ENCODE measurements at regions of chrX and their contacts with region 1.

Region 1: GRCh38 chrX:109714340-109714958 is 18.6 kb downstream of the ACSL4 start:
- DNase-seq: no peak
- H3K4me3 ChIP-seq: no peak overlapping the region
- H3K27ac ChIP-seq: no peak overlapping the region
- H3K4me1 ChIP-seq: peaks cover 13% of the 10 kb centered on the region
- CTCF ChIP-seq: no peak

Region 2: GRCh38 chrX:109886122-109886761 is 171.8 kb after region 1 on chrX:
- CTCF ChIA-PET with region 1: no interaction called
- POLR2A ChIA-PET with region 1: no interaction called
- intact Hi-C with region 1: loop called (anchors 10 kb)
- DNase-seq: peak; percentile 35
- H3K4me3 ChIP-seq: no peak overlapping the region
- H3K27ac ChIP-seq: no peak overlapping the region
- H3K4me1 ChIP-seq: peaks cover 12% of the 10 kb centered on the region
- CTCF ChIP-seq: peak; percentile 78

Region 3: GRCh38 chrX:109974906-109975655 is 260.6 kb after region 1 on chrX:
- CTCF ChIA-PET with region 1: no interaction called
- POLR2A ChIA-PET with region 1: no interaction called
- intact Hi-C with region 1: no loop called
- DNase-seq: no peak
- H3K4me3 ChIP-seq: no peak overlapping the region
- H3K27ac ChIP-seq: no peak overlapping the region
- H3K4me1 ChIP-seq: no peaks in the 10 kb centered on the region
- CTCF ChIP-seq: no peak

Measured in OCI-LY7 (cell line).